H1 (cell line): ENCODE measurements at regions of chr11 and their contacts with region 1.

Region 1: DNA sequence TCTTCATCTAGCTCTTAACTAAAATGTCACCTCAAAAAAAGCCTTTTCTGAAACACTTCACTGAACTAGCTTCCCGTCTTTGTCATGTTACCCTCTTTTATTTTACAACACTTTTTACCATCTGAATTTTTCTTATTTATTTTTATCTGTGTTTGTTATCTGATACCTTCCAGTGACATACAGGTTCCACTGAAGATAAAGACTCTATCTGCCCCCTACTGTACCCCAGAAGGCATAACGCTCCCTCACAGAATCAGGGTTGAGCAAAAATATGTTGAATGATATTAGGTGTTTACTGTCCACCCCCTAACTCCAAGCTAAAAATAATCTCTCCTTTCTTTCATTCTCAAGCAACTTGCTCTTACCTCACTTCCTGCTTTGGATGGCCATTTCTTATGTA is 654.2 kb downstream of the NELL1 start:
- DNase-seq: no peak
- H3K4me3 ChIP-seq: no peak overlapping the region
- H3K27ac ChIP-seq: no peak overlapping the region
- H3K4me1 ChIP-seq: peaks cover 0 to 1% (median 0%) of the 10 kb centered on the region in 4 experiments; a peak in 1 of 7 replicates
- H3K27me3 ChIP-seq: no peaks in the 10 kb centered on the region
- CTCF ChIP-seq: peak in 2 of 3 experiments; percentile 48 to 58; a peak in 3 of 4 replicates
- EP300 ChIP-seq: no peak
- POLR2A ChIP-seq: no peak
- RAD21 ChIP-seq: peak; percentile 69 to 70

Region 2: GRCh38 chr11:21026685-21027084 is 296.9 kb before region 1 on chr11:
- CTCF ChIA-PET with region 1: no interaction called
- POLR2A ChIA-PET with region 1: no interaction called
- DNase-seq: no peak
- H3K4me3 ChIP-seq: no peak overlapping the region
- H3K27ac ChIP-seq: no peak overlapping the region
- H3K4me1 ChIP-seq: peaks cover 0 to 6% (median 2%) of the 10 kb centered on the region in 4 experiments; a peak in 2 of 7 replicates
- H3K27me3 ChIP-seq: no peaks in the 10 kb centered on the region
- CTCF ChIP-seq: no peak
- EP300 ChIP-seq: no peak
- POLR2A ChIP-seq: no peak
- RAD21 ChIP-seq: no peak

Region 3: GRCh38 chr11:21142007-21142406 is 181.6 kb before region 1 on chr11:
- CTCF ChIA-PET with region 1: interaction called, 20 read pairs
- POLR2A ChIA-PET with region 1: no interaction called
- DNase-seq: peak in 1 of 2 experiments; percentile 56
- H3K4me3 ChIP-seq: no peak overlapping the region
- H3K27ac ChIP-seq: no peak overlapping the region
- H3K4me1 ChIP-seq: peaks cover 0 to 6% (median 2%) of the 10 kb centered on the region in 4 experiments; a peak in 3 of 7 replicates
- H3K27me3 ChIP-seq: no peaks in the 10 kb centered on the region
- CTCF ChIP-seq: peak in 2 of 3 experiments; percentile 53 to 56; a peak in 3 of 4 replicates
- EP300 ChIP-seq: no peak
- POLR2A ChIP-seq: no peak
- RAD21 ChIP-seq: peak; percentile 77 to 81

Region 4: GRCh38 chr11:21307874-21308273 is 15.7 kb before region 1 on chr11:
- CTCF ChIA-PET with region 1: interaction called, 13 read pairs
- POLR2A ChIA-PET with region 1: no interaction called
- DNase-seq: no peak
- H3K4me3 ChIP-seq: no peak overlapping the region
- H3K27ac ChIP-seq: no peak overlapping the region
- H3K4me1 ChIP-seq: no peaks in the 10 kb centered on the region
- H3K27me3 ChIP-seq: no peaks in the 10 kb centered on the region
- CTCF ChIP-seq: no peak
- EP300 ChIP-seq: no peak
- POLR2A ChIP-seq: no peak
- RAD21 ChIP-seq: no peak

Region 5: DNA sequence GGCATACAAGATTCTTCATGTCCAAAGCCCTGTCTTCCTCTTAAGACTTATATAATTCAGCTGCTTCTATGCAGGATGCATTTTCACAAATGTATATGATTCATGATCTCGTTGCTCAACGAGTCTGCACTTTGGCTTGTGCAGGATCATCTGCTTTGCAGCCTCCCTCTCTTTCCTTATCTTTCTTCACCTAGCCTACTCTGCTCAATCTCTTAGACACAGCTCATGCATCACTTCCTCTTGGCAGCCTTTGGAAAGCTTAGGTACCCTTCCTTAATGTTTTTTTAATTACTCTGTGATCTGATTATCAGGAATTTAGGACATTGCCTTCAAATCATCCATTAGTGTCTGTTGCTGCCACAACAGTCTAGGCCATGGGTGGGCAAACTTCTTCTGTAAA is 19.6 kb after region 1 on chr11:
- CTCF ChIA-PET with region 1: interaction called, 14 read pairs
- POLR2A ChIA-PET with region 1: no interaction called
- DNase-seq: no peak
- H3K4me3 ChIP-seq: no peak overlapping the region
- H3K27ac ChIP-seq: no peak overlapping the region
- H3K4me1 ChIP-seq: no peaks in the 10 kb centered on the region
- H3K27me3 ChIP-seq: no peaks in the 10 kb centered on the region
- CTCF ChIP-seq: no peak
- EP300 ChIP-seq: no peak
- POLR2A ChIP-seq: no peak
- RAD21 ChIP-seq: no peak

Region 6: DNA sequence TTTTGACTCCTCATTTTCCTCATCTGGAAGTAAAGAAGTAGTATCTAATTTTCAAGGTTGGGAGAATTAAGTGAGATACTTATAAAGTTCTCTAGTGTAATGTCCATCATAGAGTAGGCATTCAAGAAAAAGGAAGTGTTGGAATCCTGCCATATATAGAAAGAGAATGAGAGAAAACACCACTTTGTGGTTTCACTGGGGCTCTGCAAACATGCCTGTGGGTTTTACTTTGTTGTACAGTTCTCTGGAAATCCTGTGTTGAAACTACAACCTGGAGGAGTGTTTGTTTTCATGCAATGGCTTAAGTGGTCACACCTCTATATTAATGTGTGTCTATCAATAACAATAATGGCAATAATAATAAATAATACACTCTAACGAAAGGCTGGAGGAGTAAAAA is 87.5 kb after region 1 on chr11:
- CTCF ChIA-PET with region 1: no interaction called
- POLR2A ChIA-PET with region 1: no interaction called
- DNase-seq: no peak
- H3K4me3 ChIP-seq: no peak overlapping the region
- H3K27ac ChIP-seq: no peak overlapping the region
- H3K4me1 ChIP-seq: no peaks in the 10 kb centered on the region
- H3K27me3 ChIP-seq: no peaks in the 10 kb centered on the region
- CTCF ChIP-seq: no peak
- EP300 ChIP-seq: no peak
- POLR2A ChIP-seq: no peak
- RAD21 ChIP-seq: no peak